SK-N-SH (cell line): ENCODE measurements at regions of chr11 and their contacts with region 1.

Region 1: GRCh38 chr11:9506489-9507276 is 45.9 kb downstream of the ZNF143 start:
- DNase-seq: peak; percentile 71
- H3K4me3 ChIP-seq: no peak overlapping the region; a peak in 1 of 4 replicates
- H3K27ac ChIP-seq: peak overlapping the region in 1 of 2 experiments; percentile 6; a peak in 1 of 4 replicates
- H3K4me1 ChIP-seq: no peaks in the 10 kb centered on the region
- H3K27me3 ChIP-seq: no peaks in the 10 kb centered on the region
- CTCF ChIP-seq: peak; percentile 97
- EP300 ChIP-seq: no peak
- RAD21 ChIP-seq: peak; percentile 95

Region 2: GRCh38 chr11:9158898-9159391 is 347.7 kb before region 1 on chr11:
- CTCF ChIA-PET with region 1: interaction called, 19 read pairs
- POLR2A ChIA-PET with region 1: no interaction called
- DNase-seq: no peak
- H3K4me3 ChIP-seq: no peak overlapping the region
- H3K27ac ChIP-seq: peak overlapping the region; percentile 20 to 70; a peak in 3 of 4 replicates
- H3K4me1 ChIP-seq: peaks cover 3 to 41% of the 10 kb centered on the region in 2 experiments; a peak in 3 of 4 replicates
- H3K27me3 ChIP-seq: no peaks in the 10 kb centered on the region
- CTCF ChIP-seq: no peak
- EP300 ChIP-seq: no peak
- RAD21 ChIP-seq: no peak

Region 3: GRCh38 chr11:9330387-9331384 is 176.0 kb before region 1 on chr11:
- CTCF ChIA-PET with region 1: no interaction called
- POLR2A ChIA-PET with region 1: no interaction called
- DNase-seq: no peak
- H3K4me3 ChIP-seq: no peak overlapping the region
- H3K27ac ChIP-seq: peak overlapping the region in 1 of 2 experiments; percentile 91; a peak in 2 of 4 replicates
- H3K4me1 ChIP-seq: peaks cover 0 to 7% of the 10 kb centered on the region in 2 experiments; a peak in 1 of 4 replicates
- H3K27me3 ChIP-seq: no peaks in the 10 kb centered on the region
- CTCF ChIP-seq: no peak
- EP300 ChIP-seq: no peak
- RAD21 ChIP-seq: no peak

Region 4: GRCh38 chr11:9489080-9489765 is 17.5 kb before region 1 on chr11:
- CTCF ChIA-PET with region 1: interaction called, 12 read pairs
- POLR2A ChIA-PET with region 1: no interaction called
- DNase-seq: no peak
- H3K4me3 ChIP-seq: peak overlapping the region in 1 of 2 experiments; percentile 30; a peak in 3 of 4 replicates
- H3K27ac ChIP-seq: peak overlapping the region; percentile 7 to 83; a peak in 3 of 4 replicates
- H3K4me1 ChIP-seq: peaks cover 0 to 15% of the 10 kb centered on the region in 2 experiments; a peak in 1 of 4 replicates
- H3K27me3 ChIP-seq: no peaks in the 10 kb centered on the region
- CTCF ChIP-seq: no peak
- EP300 ChIP-seq: no peak
- RAD21 ChIP-seq: no peak

Region 5: GRCh38 chr11:9527481-9528140 is 20.9 kb after region 1 on chr11:
- CTCF ChIA-PET with region 1: interaction called, 12 read pairs
- POLR2A ChIA-PET with region 1: no interaction called
- DNase-seq: no peak
- H3K4me3 ChIP-seq: no peak overlapping the region
- H3K27ac ChIP-seq: peak overlapping the region; percentile 58 to 91; a peak in 3 of 4 replicates
- H3K4me1 ChIP-seq: peaks cover 7 to 35% of the 10 kb centered on the region in 2 experiments
- H3K27me3 ChIP-seq: no peaks in the 10 kb centered on the region
- CTCF ChIP-seq: no peak
- EP300 ChIP-seq: peak in 1 of 2 experiments; percentile 46; a peak in 1 of 4 replicates
- RAD21 ChIP-seq: no peak